Naive thymus-derived CD4-positive, alpha-beta T cell (primary cell): ENCODE measurements at regions of chr2 and their contacts with region 1.

Region 1: GRCh38 chr2:134118279-134119116 is 135.4 kb upstream of the MGAT5 start:
- DNase-seq: peak; percentile 37 to 86 (median 79)
- ATAC-seq: peak; percentile 64
- H3K4me3 ChIP-seq: peak overlapping the region; percentile 93
- H3K4me3 Mint-ChIP-seq: peak overlapping the region; percentile 82 to 99 (median 96)
- H3K27ac ChIP-seq: no peak overlapping the region
- H3K27ac Mint-ChIP-seq: peak overlapping the region in 5 of 9 donors; percentile 82 to 99 (median 86)
- H3K4me1 ChIP-seq: peaks cover 15 to 32% of the 10 kb centered on the region in 2 donors
- H3K4me1 Mint-ChIP-seq: peaks cover 30 to 39% (median 35%) of the 10 kb centered on the region in 7 donors
- H3K27me3 ChIP-seq: no peaks in the 10 kb centered on the region
- H3K27me3 Mint-ChIP-seq: peaks cover 0 to 21% (median 0%) of the 10 kb centered on the region in 5 donors

Region 2: GRCh38 chr2:133848111-133848649 is 270.3 kb before region 1 on chr2:
- CTCF ChIA-PET with region 1: no interaction called
- POLR2A ChIA-PET with region 1: no interaction called
- intact Hi-C with region 1: no loop called
- DNase-seq: no peak
- ATAC-seq: no peak
- H3K4me3 ChIP-seq: no peak overlapping the region
- H3K4me3 Mint-ChIP-seq: no peak overlapping the region
- H3K27ac ChIP-seq: no peak overlapping the region
- H3K27ac Mint-ChIP-seq: no peak overlapping the region
- H3K4me1 ChIP-seq: no peaks in the 10 kb centered on the region
- H3K4me1 Mint-ChIP-seq: peaks cover 0 to 7% (median 5%) of the 10 kb centered on the region in 7 donors
- H3K27me3 ChIP-seq: no peaks in the 10 kb centered on the region
- H3K27me3 Mint-ChIP-seq: peaks cover 11 to 30% (median 15%) of the 10 kb centered on the region in 5 donors

Region 3: DNA sequence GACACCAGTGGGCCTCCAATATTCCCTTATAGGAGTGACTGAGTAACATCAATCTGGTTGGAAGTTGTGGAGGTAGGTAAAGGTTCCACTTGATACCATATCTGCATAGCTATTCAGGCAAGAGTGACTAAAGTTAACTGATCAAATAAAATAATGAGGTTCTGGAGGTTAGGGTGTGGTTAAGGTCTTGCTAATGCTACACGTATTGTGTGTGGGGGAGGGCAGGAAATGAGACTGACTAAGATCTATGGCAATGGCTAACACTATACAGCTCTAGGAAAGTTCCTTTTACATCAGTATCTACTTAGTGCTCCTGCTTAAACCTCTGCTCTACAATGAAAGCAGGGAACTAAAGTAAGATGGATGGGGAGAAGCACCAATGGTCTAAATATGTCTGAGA is 13.7 kb before region 1 on chr2:
- CTCF ChIA-PET with region 1: no interaction called
- POLR2A ChIA-PET with region 1: no interaction called
- intact Hi-C with region 1: no loop called
- DNase-seq: no peak
- ATAC-seq: peak; percentile 47
- H3K4me3 ChIP-seq: no peak overlapping the region
- H3K4me3 Mint-ChIP-seq: no peak overlapping the region
- H3K27ac ChIP-seq: no peak overlapping the region
- H3K27ac Mint-ChIP-seq: no peak overlapping the region
- H3K4me1 ChIP-seq: no peaks in the 10 kb centered on the region
- H3K4me1 Mint-ChIP-seq: peaks cover 0 to 11% (median 7%) of the 10 kb centered on the region in 7 donors
- H3K27me3 ChIP-seq: no peaks in the 10 kb centered on the region
- H3K27me3 Mint-ChIP-seq: peaks cover 0 to 13% (median 0%) of the 10 kb centered on the region in 5 donors

Region 4: DNA sequence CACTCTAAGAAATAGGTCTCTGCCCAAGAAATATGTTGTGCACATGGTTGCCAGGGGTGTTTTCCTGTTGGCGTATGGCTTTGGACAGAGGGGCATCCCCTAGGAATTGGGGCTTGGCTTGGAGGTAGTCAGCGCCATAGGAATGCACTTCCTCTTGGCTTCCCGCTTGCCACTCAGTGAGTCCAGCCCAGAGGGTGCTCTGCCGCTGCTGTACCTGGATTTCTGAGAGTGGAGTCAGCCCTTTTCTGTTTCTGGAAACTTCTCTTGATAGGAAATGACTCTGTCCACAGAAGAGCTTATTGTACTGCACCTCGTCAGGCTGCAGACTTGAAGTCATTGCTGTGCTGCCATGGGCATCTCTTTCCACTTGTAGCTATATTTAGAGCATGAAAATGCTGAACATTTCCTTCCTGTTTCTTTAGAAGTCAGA is 18.7 kb after region 1 on chr2:
- CTCF ChIA-PET with region 1: no interaction called
- POLR2A ChIA-PET with region 1: interaction called, 3 read pairs
- intact Hi-C with region 1: loop called in 1 of 2 experiments (anchors 2 kb)
- DNase-seq: peak in 1 of 9 donors; percentile 16
- ATAC-seq: peak; percentile 47
- H3K4me3 ChIP-seq: no peak overlapping the region
- H3K4me3 Mint-ChIP-seq: peak overlapping the region; percentile 36 to 79 (median 66)
- H3K27ac ChIP-seq: no peak overlapping the region
- H3K27ac Mint-ChIP-seq: peak overlapping the region in 7 of 9 donors; percentile 19 to 74 (median 60)
- H3K4me1 ChIP-seq: peaks cover 18 to 27% of the 10 kb centered on the region in 2 donors
- H3K4me1 Mint-ChIP-seq: peaks cover 45 to 98% (median 89%) of the 10 kb centered on the region in 7 donors
- H3K27me3 ChIP-seq: no peaks in the 10 kb centered on the region
- H3K27me3 Mint-ChIP-seq: no peaks in the 10 kb centered on the region

Region 5: DNA sequence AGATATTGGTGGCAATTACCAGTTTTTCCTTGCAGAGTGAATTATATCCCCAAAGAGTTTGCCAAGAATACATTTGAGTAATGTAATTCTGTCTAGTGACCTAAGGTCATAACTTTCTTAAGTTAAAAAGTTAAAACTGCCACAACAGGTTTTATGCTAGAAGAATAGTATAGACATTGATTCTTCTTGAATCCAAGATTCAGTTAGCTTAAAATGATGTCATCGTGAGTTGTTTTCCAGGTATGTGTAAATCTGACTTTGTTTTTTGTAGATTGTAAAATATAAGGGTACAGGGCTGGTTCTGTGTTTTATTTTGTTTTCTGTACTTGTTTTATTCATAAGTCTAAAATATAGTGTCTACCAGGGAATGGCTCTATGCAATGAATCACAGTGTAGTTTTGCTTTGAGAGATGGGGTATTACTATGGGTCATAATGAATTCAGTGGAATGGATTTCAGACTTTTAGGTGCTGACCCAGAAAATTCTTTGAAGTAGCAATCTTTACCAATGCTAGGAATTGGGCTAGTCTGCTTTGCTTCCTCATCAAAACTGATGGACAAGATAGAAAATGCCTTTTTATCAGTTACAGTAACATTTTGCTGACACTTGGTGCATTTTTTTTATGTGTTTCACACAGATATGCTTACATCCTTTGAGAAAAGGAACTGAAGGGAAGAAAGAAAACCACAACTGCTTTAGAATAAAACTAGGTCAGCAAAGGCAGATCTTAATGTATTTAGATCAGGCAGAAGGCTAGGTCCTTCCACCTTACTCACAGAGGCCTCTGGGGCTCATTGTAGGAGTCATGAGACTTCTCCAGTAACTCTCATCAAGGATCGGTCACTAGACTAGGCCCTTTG is 114.6 kb after region 1 on chr2:
- CTCF ChIA-PET with region 1: interaction called, 4 read pairs
- POLR2A ChIA-PET with region 1: no interaction called
- intact Hi-C with region 1: loop called in 1 of 2 experiments (anchors 1 kb)
- DNase-seq: peak in 7 of 9 donors; percentile 13 to 68 (median 57)
- ATAC-seq: peak; percentile 84
- H3K4me3 ChIP-seq: peak overlapping the region; percentile 17
- H3K4me3 Mint-ChIP-seq: peak overlapping the region; percentile 29 to 81 (median 64)
- H3K27ac ChIP-seq: peak overlapping the region; percentile 37
- H3K27ac Mint-ChIP-seq: peak overlapping the region; percentile 62 to 87 (median 76)
- H3K4me1 ChIP-seq: peaks cover 56 to 59% of the 10 kb centered on the region in 2 donors
- H3K4me1 Mint-ChIP-seq: peaks cover 57 to 80% (median 75%) of the 10 kb centered on the region in 7 donors
- H3K27me3 ChIP-seq: no peaks in the 10 kb centered on the region
- H3K27me3 Mint-ChIP-seq: no peaks in the 10 kb centered on the region

Region 6: DNA sequence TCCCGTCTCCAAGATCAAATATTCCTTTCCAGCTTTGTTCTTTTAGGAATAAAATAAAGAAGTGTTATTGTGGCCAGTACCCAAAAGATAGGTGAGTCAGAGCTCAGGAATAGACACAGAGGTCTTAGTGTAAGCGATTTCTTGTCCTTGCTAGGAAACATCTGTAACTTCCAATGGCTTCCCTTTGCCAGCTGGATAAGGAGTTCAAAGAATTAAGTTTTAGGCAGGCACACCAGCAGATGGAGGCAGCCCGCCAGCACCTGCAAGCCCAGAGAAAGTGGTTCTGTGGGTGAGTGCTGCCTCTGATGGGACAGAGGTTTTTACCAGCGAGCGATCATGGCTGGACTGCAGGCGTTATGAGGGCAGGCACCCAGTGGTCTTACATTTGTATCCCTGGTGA is 260.8 kb after region 1 on chr2:
- CTCF ChIA-PET with region 1: no interaction called
- POLR2A ChIA-PET with region 1: no interaction called
- intact Hi-C with region 1: no loop called
- DNase-seq: no peak
- ATAC-seq: no peak
- H3K4me3 ChIP-seq: no peak overlapping the region
- H3K4me3 Mint-ChIP-seq: no peak overlapping the region
- H3K27ac ChIP-seq: no peak overlapping the region
- H3K27ac Mint-ChIP-seq: peak overlapping the region in 1 of 9 donors; percentile 10
- H3K4me1 ChIP-seq: no peaks in the 10 kb centered on the region
- H3K4me1 Mint-ChIP-seq: peaks cover 0 to 9% (median under 1%) of the 10 kb centered on the region in 7 donors
- H3K27me3 ChIP-seq: no peaks in the 10 kb centered on the region
- H3K27me3 Mint-ChIP-seq: no peaks in the 10 kb centered on the region

Region 7: DNA sequence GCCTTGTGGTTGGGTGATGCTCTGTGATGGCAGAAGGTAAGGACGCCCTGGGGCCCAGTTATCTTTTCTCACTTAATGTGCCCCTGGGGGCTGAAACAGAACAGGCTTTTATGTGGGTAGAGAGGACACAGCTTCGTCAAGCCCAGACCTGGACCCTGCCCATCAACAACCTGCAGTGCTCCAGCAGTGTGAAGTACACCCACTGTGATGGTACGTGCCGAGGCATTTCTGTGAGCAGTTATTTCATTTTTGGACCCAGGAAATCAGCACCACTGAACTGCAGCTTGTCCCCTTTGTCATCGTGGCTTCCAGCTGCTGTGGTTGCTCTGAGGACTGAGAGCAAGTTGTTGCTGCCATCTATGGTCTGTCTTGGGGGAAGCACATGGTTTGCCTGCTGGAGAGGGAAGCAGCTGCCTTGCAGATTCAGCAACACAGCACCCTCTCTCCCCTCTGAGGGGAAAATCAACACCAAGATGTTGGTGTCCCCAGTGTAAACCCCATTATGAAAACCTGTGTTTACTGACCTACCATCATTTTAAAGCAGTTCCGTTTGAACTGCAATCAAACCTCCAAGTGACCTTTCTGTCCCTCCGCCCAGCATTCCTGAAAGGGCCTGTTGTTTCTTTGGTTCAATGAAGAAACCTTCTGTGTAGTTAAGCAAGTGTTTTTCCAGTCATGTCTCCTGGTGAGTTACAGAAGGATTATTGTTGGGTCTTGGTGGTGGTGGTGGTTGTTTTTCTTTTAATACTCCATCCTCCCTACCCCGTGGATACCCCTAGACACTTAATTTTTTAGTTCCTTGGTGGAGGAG is 293.5 kb after region 1 on chr2:
- CTCF ChIA-PET with region 1: interaction called, 102 read pairs
- POLR2A ChIA-PET with region 1: interaction called, 16 read pairs
- intact Hi-C with region 1: loop called (anchors 1 kb)
- DNase-seq: peak; percentile 27 to 83 (median 70)
- ATAC-seq: peak; percentile 95
- H3K4me3 ChIP-seq: no peak overlapping the region
- H3K4me3 Mint-ChIP-seq: no peak overlapping the region
- H3K27ac ChIP-seq: no peak overlapping the region
- H3K27ac Mint-ChIP-seq: peak overlapping the region in 6 of 9 donors; percentile 6 to 63 (median 40)
- H3K4me1 ChIP-seq: peaks cover 6 to 17% of the 10 kb centered on the region in 2 donors
- H3K4me1 Mint-ChIP-seq: peaks cover 17 to 47% (median 38%) of the 10 kb centered on the region in 7 donors
- H3K27me3 ChIP-seq: no peaks in the 10 kb centered on the region
- H3K27me3 Mint-ChIP-seq: no peaks in the 10 kb centered on the region

Region 8: DNA sequence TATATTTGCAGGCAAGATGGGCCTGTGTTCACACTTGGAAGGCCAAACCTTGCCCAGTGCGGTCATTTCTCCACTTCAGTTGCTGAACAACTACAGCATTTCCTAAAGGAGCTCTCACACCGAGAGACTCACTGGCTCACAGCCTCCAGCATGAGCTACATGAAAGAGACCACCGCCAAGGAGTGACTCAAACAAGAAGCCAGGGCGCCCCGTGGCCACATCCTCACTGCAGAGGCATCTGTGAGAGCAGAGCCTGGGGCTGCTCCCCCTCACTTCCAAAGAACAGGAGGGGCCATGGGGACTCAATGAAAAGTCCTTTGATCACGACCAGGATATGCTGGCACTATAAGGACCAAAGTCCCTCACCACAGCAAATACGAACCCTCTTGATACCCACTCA is 550.3 kb after region 1 on chr2:
- CTCF ChIA-PET with region 1: no interaction called
- POLR2A ChIA-PET with region 1: no interaction called
- intact Hi-C with region 1: loop called (anchors 2 to 5 kb)
- DNase-seq: peak; percentile 53 to 92 (median 88)
- ATAC-seq: peak; percentile 85
- H3K4me3 ChIP-seq: peak overlapping the region; percentile 4
- H3K4me3 Mint-ChIP-seq: peak overlapping the region; percentile 62 to 82 (median 68)
- H3K27ac ChIP-seq: no peak overlapping the region
- H3K27ac Mint-ChIP-seq: peak overlapping the region; percentile 74 to 96 (median 89)
- H3K4me1 ChIP-seq: peaks cover 54 to 61% of the 10 kb centered on the region in 2 donors
- H3K4me1 Mint-ChIP-seq: peaks cover 60 to 87% (median 72%) of the 10 kb centered on the region in 7 donors
- H3K27me3 ChIP-seq: no peaks in the 10 kb centered on the region
- H3K27me3 Mint-ChIP-seq: peaks cover 0 to 37% (median 4%) of the 10 kb centered on the region in 5 donors

Region 9: DNA sequence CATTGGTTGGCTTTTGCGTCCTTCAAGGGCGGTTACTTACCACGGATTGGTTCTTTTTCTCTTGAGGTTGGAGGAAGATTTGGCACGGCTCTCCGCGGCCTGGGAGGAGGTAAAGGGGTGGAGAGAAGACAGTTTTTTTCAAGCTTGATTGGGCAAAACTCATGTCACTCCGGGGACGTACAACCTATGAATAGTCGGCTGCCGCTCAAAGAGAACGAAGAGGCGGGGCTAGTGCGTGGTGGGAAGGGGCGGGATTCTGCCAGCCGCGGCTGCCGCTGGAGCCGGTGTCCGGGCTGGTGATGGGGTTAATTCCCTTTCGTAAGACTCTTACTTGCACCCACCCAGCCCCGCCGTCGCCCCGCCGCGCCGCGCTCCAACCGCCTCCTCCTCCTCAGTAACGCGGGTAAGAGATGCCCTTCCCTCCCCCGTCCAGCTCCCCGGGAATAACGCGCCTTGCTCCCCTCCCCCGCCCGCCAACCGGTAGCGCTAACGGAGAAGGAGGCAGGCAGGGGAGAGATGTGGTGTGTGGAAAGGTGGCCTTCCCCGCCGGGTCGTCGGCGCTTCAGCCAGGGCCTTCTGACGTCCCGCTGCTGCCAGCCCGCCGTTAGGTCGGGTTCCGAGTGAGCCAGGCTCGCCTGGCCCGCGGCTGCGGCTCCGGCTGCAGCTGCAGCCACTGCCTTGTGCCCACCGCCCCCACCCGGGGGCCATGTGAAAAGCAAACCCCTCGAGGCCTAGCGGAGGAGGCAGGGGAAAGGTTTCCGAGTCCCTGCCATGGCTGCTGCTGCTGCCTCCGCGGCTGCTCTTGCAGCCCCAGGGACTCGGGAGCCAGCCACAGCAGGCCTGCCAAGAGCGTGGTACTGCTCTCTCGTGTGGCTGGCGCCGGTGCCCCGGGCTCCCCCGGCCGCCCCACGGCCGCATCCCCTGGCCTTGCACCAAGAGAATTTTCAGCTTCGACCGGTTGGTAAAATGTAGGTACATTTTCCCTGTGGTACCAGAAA is 1413.0 kb after region 1 on chr2 and contains the start of gene R3HDM1:
- CTCF ChIA-PET with region 1: no interaction called
- POLR2A ChIA-PET with region 1: no interaction called
- intact Hi-C with region 1: loop called (anchors 2 kb)
- DNase-seq: peak in 8 of 9 donors; percentile 71 to 99 (median 98)
- ATAC-seq: peak; percentile 89
- H3K4me3 ChIP-seq: peak within 1 kb of the TSS; percentile 83
- H3K4me3 Mint-ChIP-seq: no peak within 1 kb of the TSS
- H3K27ac ChIP-seq: peak within 1 kb of the TSS; percentile 84
- H3K27ac Mint-ChIP-seq: peak within 1 kb of the TSS in 7 of 9 donors; percentile 36 to 81 (median 67)
- H3K4me1 ChIP-seq: peaks cover 4 to 21% of the 10 kb centered on the region in 2 donors
- H3K4me1 Mint-ChIP-seq: peaks cover 10 to 39% (median 34%) of the 10 kb centered on the region in 7 donors
- H3K27me3 ChIP-seq: no peaks in the 10 kb centered on the region
- H3K27me3 Mint-ChIP-seq: no peaks in the 10 kb centered on the region
- total RNA-seq, gene R3HDM1: 35.0 to 58.2 (median 47.0) TPM